CD8-positive, alpha-beta memory T cell (primary cell): ENCODE measurements at regions of chr12 and their contacts with region 1.

Region 1: DNA sequence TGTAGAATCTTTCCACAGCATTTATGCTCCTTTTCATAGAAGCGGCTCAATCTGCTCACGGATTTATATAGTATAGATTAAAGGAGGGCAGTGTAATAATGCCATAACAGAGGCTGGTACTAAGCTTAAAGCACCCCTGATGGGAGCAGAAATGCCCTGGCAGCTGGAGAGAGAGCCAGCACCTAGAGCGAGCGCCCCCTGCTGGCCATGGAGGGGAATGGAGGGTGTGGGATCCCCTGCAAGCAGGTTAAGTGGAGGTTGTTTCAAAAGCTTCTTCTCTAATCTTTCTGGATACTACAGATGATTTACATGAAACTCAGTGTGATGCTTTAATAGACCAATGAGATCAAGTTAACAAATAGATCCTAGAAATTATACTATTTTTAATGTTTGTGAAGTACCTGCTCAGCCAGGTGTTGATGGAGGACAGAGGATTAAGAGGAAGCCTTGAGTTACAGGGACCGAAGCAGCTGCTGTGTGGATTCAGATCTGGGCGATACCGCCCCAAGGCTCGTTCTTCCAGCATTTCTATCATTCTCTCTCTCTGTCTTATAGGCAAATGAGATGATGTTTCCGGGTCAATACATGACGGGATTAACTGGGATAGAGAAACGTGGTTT is 1519.3 kb upstream of the TMEM132C start:
- DNase-seq: peak in 4 of 5 donors; percentile 29 to 65 (median 32)
- H3K4me3 ChIP-seq: no peak overlapping the region
- H3K4me3 Mint-ChIP-seq: no peak overlapping the region
- H3K27ac ChIP-seq: no peak overlapping the region
- H3K27ac Mint-ChIP-seq: peak overlapping the region in 2 of 8 donors; percentile 25 to 60
- H3K4me1 ChIP-seq: no peaks in the 10 kb centered on the region
- H3K4me1 Mint-ChIP-seq: peaks cover 0 to 17% (median 5%) of the 10 kb centered on the region in 3 donors
- H3K27me3 ChIP-seq: no peaks in the 10 kb centered on the region
- H3K27me3 Mint-ChIP-seq: peaks cover 0 to 2% of the 10 kb centered on the region in 2 donors

Region 2: DNA sequence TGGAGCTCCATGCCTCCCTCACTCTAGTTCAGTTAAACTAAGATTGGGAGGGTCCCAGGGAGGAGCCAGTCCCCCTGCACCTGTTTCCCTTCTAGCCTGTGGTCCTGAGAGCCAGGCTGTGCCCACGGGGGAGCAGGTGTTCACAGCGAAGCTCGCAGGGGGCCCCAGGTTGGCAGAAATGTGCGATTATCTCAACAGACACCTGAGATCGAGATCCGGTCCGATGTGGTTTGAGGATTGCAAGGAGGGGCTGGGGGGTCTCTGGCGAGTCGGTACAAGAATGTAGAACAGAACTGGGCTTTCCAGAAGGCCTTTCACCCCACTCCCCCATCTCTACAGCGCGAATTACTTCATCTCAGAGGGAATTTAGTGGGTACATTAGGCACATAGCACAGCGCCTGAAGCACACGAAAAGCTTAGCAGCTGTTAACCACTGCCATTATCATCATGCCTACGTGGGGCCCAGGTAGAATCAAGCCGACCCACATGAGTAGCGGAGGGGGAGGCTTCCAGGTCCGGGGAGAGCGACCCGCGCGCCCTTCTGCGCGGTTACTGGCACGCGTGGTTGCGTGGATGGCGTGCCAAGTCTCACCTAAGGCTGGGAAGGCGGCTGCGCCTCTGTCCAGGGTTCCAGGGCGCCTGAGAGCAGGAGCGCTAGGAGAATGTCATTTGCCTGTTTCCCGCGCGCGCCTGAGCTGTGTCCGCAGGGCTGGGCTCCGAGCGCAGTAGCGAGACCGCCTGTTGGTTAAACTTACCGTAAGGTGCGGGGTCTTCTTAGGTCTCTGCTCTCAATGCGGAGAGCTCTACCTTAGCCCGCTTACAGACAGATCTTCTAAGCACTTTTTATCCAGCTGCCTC is 20.2 kb before region 1 on chr12:
- CTCF ChIA-PET with region 1: interaction called, 10 read pairs
- POLR2A ChIA-PET with region 1: no interaction called
- DNase-seq: no peak
- H3K4me3 ChIP-seq: no peak overlapping the region
- H3K4me3 Mint-ChIP-seq: peak overlapping the region in 3 of 7 donors; percentile 13 to 44 (median 28)
- H3K27ac ChIP-seq: no peak overlapping the region
- H3K27ac Mint-ChIP-seq: no peak overlapping the region
- H3K4me1 ChIP-seq: no peaks in the 10 kb centered on the region
- H3K4me1 Mint-ChIP-seq: peaks cover 0 to 17% (median 3%) of the 10 kb centered on the region in 3 donors
- H3K27me3 ChIP-seq: peaks cover 7% of the 10 kb centered on the region
- H3K27me3 Mint-ChIP-seq: peaks cover 31 to 41% of the 10 kb centered on the region in 2 donors

Region 3: DNA sequence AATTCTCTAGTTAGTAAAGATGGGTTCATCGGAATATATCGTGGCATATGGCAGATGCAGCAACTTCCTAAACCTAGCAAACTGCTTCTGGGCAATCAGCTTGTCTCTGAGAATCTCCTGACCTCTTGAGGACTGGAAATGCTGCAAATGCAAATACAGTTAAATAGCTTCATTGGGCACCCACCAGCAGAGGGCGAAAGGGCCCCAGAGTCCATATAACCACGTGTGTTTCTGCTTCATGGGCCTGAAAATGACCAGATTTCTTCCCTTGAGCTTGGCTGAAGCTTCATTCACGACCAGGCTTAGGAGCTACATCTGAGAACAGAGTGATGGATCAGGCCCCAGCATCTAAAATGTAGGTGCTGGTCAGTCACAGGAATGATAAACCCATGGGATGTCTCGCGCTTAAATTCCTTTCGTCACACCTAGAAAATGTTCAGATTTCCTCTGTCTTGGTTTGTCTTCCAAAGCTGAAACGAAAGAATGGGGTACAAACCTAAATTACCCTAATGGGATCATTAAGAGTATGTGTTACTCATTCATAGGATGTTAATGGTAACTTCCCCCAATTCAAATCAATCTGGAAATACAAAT is 36.8 kb after region 1 on chr12:
- CTCF ChIA-PET with region 1: interaction called, 16 read pairs
- POLR2A ChIA-PET with region 1: no interaction called
- DNase-seq: peak in 1 of 5 donors; percentile 10
- H3K4me3 ChIP-seq: no peak overlapping the region
- H3K4me3 Mint-ChIP-seq: no peak overlapping the region
- H3K27ac ChIP-seq: no peak overlapping the region
- H3K27ac Mint-ChIP-seq: peak overlapping the region in 1 of 8 donors; percentile 1
- H3K4me1 ChIP-seq: no peaks in the 10 kb centered on the region
- H3K4me1 Mint-ChIP-seq: peaks cover 8 to 28% (median 24%) of the 10 kb centered on the region in 3 donors
- H3K27me3 ChIP-seq: no peaks in the 10 kb centered on the region
- H3K27me3 Mint-ChIP-seq: no peaks in the 10 kb centered on the region

Region 4: DNA sequence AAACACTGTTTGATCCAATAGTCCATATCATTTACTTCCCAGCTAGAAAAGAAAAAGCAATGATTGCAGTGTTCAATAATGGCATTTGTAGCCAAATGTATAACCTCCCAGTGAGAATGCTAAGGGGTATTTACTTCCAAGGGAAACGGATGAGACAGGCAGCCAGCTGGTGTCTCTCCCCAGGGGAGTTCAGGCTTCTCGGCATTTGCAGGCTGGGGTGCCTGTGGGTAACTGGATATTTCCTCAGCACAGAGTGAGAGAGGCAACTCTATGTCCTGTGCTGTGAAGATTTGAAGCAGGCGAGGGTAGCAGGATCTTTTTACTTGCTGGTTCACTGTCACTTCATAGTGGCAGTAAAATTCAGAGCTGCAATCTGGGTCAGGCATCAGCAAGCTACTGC is 63.8 kb after region 1 on chr12:
- CTCF ChIA-PET with region 1: no interaction called
- POLR2A ChIA-PET with region 1: no interaction called
- DNase-seq: no peak
- H3K4me3 ChIP-seq: no peak overlapping the region
- H3K4me3 Mint-ChIP-seq: no peak overlapping the region
- H3K27ac ChIP-seq: no peak overlapping the region
- H3K27ac Mint-ChIP-seq: no peak overlapping the region
- H3K4me1 ChIP-seq: no peaks in the 10 kb centered on the region
- H3K4me1 Mint-ChIP-seq: no peaks in the 10 kb centered on the region
- H3K27me3 ChIP-seq: no peaks in the 10 kb centered on the region
- H3K27me3 Mint-ChIP-seq: peaks cover 13 to 20% of the 10 kb centered on the region in 2 donors